ENCODE measurements at regions of chr3 and their contacts with region 1.

Region 1: DNA sequence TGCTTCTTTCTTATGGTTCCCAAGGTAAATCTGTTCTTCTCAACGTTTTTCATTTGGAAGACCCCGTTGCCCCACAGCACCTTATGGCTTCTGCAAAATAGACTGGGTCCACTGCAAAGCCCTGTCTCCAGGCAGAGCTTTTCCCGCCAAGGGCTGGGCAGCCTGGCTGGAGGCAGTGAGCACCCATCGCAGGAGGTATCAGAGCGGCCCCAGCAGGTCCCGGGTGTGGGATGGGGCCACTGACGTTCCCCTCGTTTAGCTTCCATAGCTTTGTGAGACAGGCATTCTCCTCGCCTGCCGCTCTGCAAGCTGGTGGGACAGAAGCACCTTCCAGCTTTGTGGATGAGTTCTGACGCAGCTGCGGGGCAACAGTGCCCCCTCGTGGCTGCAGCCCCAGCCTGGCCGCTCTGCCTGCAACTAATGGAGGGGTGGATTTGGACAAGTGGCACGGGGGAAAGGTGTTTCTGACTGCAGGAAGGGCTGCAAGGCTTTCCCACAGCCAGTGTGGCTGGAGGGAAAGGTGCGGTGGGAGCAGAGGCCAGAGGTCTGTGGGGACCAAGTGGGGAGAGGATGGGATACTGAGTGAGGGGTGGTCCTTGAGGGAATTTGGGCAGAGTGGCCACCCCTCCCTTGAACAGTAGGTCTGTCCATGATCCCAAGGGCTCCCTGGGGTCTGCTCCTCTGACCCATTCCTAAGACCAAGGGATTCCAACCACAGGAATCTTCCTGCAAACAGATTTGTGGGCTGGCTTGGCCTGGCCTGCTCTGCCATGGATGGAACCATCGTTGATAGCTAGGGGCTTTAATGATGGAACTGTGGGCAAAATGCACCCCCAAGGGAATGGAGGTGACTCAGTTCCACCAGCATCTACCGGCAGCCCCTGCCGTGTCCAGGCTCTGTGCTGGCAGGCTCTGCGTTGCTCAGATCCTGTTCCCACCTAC is 99.4 kb downstream of the FBLN2 start:
- DNase-seq: peak; percentile 80 to 93
- H3K4me3 ChIP-seq: no peak overlapping the region
- H3K4me1 ChIP-seq: peaks cover 30% of the 10 kb centered on the region
- H3K27me3 ChIP-seq: no peaks in the 10 kb centered on the region; the same call in 1 of the 2 replicates

Region 2: GRCh38 chr3:13091898-13092611 is 556.3 kb before region 1 on chr3:
- in situ Hi-C with region 1: loop called (anchors 10 kb)
- DNase-seq: peak; percentile 49 to 89
- H3K4me3 ChIP-seq: no peak overlapping the region
- H3K4me1 ChIP-seq: no peaks in the 10 kb centered on the region
- H3K27me3 ChIP-seq: no peaks in the 10 kb centered on the region

Region 3: DNA sequence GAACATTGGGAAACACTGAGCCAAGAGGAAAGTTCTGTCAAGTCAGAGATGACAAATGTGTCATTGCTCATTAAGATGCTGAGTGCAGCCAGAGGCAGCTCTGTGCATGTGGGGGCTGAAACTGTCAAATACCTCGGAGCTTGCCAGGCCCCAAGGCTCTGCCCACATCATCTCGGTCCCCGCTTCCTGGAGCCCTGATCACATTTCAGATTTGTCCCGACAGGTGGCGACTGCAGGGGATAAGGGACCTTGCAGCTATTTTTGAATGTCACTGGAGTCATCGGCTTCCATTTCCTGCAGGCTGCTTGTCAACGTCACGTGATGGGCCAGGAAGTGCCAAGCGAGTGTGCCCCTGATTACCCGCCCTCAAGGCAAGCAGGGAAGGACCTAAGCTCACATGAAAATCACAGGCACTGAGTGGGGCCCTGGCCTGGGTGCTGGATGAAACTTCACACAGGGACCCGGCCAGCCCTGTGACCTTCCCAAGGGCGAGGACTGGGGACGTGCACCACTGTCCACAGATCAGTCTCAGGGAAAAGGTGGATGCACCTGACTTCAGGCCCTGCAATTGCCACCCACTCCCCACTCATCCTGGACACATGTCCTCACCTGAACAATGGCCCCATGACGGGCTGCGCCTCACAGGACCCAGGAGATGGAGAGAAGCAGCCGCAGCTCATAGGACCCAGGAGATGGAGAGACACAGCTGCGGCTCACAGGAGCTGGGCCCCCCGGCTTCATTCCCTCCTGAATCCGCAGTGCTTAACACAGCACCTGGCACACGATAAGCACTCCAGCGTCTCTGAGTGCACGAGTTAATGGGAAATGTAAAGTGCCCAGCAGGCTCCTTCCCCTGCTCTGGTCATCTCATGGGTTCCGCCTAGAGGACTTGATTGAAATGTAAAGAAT is 301.6 kb before region 1 on chr3:
- in situ Hi-C with region 1: no loop called
- DNase-seq: no peak
- H3K4me3 ChIP-seq: no peak overlapping the region
- H3K4me1 ChIP-seq: no peaks in the 10 kb centered on the region
- H3K27me3 ChIP-seq: no peaks in the 10 kb centered on the region

Region 4: DNA sequence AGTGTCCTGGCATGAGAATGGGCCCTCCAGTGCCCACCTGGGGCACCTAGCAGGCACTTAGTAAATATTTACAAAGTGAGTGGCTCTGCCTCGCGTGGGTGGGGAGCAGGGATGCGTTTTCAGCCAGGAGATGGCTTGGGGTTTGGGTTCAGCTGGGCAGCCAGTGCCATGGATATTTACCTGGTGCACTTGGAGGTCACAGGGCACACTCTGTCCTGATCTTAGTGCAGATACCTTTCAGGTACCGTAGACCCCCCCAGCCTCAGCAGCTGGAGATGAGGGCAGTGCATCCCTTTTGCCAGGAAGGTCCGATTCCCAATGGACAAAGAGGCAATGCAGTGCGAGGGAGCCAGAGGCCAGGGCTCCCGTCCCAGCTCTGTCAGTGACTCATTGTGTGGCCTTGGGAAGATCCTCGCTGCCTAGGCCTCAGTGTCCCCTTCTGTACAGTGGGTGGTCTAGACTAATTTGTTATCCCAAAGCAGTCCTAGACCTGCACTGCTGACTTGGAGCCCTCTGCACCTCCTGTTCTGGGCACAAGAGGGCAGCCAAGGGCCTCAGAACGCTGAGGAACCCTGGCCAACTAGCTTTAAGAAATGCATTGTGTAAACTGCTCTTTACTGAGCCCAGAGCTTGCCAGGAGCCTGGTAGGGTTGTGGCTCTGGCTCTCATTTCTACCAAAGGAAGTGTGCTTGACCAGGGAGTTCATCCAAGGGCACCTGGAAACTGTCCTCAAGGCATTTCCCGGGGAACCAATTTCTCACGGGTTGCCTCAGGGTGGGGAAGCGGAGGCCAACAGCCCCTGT is 152.2 kb before region 1 on chr3:
- in situ Hi-C with region 1: loop called (anchors 5 kb)
- DNase-seq: peak; percentile 75 to 82
- H3K4me3 ChIP-seq: no peak overlapping the region
- H3K4me1 ChIP-seq: peaks cover 6% of the 10 kb centered on the region
- H3K27me3 ChIP-seq: no peaks in the 10 kb centered on the region

Region 5: DNA sequence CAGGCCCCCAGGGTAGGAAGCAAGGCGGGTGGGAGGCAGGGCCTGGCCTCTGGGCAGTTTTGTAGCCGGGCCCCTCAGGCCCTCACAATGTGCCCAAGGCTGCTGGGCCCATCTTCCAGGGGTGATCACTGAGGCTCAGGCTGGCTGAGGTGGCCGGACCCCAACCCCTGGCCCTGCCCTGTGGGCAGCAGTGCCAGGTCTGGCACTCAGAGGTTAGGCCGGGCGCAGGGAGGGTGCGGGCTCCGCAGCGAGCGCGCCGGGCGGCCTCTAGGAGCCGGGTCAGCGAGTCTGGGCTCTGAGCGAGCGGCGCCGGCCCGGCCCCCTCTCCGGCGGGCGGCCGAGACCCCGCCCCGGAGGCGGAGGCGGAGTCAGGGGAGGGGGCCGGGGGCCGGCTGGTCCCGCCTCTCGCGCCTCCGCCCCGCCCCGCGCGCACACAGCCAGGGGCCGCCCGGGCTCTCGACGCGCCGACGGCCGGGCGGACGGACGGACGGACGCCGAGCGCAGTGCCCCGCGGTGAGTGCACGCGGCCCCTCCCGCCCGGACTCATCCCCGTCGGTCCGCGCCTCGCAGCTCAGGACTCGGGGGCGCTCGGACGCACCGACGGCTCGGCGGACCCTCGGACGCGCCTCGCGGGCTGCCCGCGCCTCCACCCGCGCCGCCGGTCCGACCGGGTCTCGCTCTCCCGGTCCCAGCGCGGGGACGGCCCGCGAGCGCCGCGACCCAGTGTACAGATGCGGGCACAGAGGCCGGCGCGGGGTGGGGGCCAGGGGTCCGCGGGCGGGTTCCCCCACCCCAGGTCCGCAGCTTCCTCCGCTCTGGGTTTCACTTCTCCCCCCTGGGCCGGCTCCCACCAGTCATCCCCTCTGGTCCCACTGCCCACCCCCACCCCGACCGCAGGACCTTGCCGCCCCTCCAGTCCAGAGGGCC is 99.4 kb before region 1 on chr3 and contains the start of gene FBLN2:
- in situ Hi-C with region 1: no loop called
- DNase-seq: peak; percentile 30 to 71
- H3K4me3 ChIP-seq: peak within 1 kb of the TSS; percentile 11; the same call in 1 of the 2 replicates
- H3K4me1 ChIP-seq: no peaks in the 10 kb centered on the region
- H3K27me3 ChIP-seq: no peaks in the 10 kb centered on the region

Region 6: GRCh38 chr3:13792512-13793371 is 144.4 kb after region 1 on chr3:
- in situ Hi-C with region 1: no loop called
- DNase-seq: no peak
- H3K4me3 ChIP-seq: no peak overlapping the region
- H3K4me1 ChIP-seq: no peaks in the 10 kb centered on the region
- H3K27me3 ChIP-seq: peaks cover 11% of the 10 kb centered on the region; the same call in 1 of the 2 replicates

Region 7: GRCh38 chr3:13884851-13885703 is 236.7 kb after region 1 on chr3:
- in situ Hi-C with region 1: loop called (anchors 5 kb)
- DNase-seq: peak; percentile 28 to 73
- H3K4me3 ChIP-seq: no peak overlapping the region
- H3K4me1 ChIP-seq: no peaks in the 10 kb centered on the region; the same call in 1 of the 2 replicates
- H3K27me3 ChIP-seq: peaks cover 31% of the 10 kb centered on the region

Region 8: GRCh38 chr3:14124615-14125190 is 476.4 kb after region 1 on chr3 and contains the starts of genes CHCHD4 and TMEM43:
- in situ Hi-C with region 1: loop called (anchors 25 kb)
- DNase-seq: peak; percentile 97 to 98
- H3K4me3 ChIP-seq: peak within 1 kb of the TSS; percentile 87
- H3K4me1 ChIP-seq: peaks cover 10% of the 10 kb centered on the region
- H3K27me3 ChIP-seq: no peaks in the 10 kb centered on the region

Measured in HAP-1 (cell line).